Heart left ventricle (tissue), 16 donors: ENCODE measurements at regions of chr17 and their contacts with region 1.

Region 1: GRCh38 chr17:81484195-81484979 is 28.2 kb downstream of the ACTG1 start:
- DNase-seq: peak; percentile 88 to 95 (median 91)
- ATAC-seq: peak; percentile 23 to 75 (median 60)
- H3K4me3 ChIP-seq: peak overlapping the region; percentile 20 to 64 (median 51)
- H3K27ac ChIP-seq: peak overlapping the region in 2 of 12 donors; percentile 49 to 62
- H3K4me1 ChIP-seq: peaks cover 0 to 70% (median 53%) of the 10 kb centered on the region in 12 donors
- H3K27me3 ChIP-seq: peaks cover 0 to 8% (median 0%) of the 10 kb centered on the region in 9 donors
- CTCF ChIP-seq: peak; percentile 93 to 100 (median 98)
- POLR2A ChIP-seq: no peak

Region 2: DNA sequence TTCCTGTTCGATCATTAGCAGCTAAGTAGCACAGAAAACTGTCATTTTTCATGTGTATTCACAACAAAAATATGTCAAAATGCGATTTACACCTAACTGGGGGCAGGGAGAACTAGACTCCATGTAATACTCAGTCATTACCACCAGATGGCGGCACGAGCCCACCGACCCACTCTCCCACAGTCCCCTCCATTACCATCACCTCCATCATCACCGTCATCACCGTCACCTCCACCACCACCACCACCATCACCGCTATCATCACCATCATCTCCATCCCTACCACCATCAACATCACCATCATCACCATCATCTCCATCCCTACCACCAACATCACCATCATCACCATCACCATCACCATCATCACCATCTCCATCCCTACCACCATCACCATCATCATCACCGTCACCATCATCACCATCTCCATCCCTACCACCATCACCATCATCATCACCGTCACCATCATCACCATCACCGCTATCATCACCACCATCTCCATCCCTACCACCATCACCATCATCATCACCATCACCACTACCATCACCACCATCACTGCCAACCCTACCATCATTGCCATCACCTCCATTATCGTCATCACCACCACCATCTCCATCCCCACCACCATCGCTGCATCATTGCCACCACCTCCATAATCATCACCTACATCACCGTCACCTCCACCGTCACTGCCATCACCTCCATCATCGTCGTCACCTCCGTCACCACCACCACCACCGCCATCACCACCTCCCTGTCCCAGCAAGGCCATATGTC is 230.8 kb before region 1 on chr17:
- intact Hi-C with region 1: loop called (anchors 1 to 2 kb)
- DNase-seq: peak in 1 of 5 donors; percentile 52
- ATAC-seq: peak in 3 of 4 donors; percentile 33 to 45 (median 35)
- H3K4me3 ChIP-seq: no peak overlapping the region
- H3K27ac ChIP-seq: no peak overlapping the region
- H3K4me1 ChIP-seq: peaks cover 3 to 19% (median 13%) of the 10 kb centered on the region in 12 donors
- H3K27me3 ChIP-seq: no peaks in the 10 kb centered on the region
- CTCF ChIP-seq: peak; percentile 66 to 88 (median 81)
- POLR2A ChIP-seq: no peak

Region 3: GRCh38 chr17:81302861-81303333 is 181.5 kb before region 1 on chr17:
- intact Hi-C with region 1: loop called in 4 of 10 experiments (anchors 2 to 10 kb)
- DNase-seq: no peak
- ATAC-seq: peak in 3 of 4 donors; percentile 33 to 50 (median 41)
- H3K4me3 ChIP-seq: no peak overlapping the region
- H3K27ac ChIP-seq: no peak overlapping the region
- H3K4me1 ChIP-seq: peaks cover 0 to 17% (median 0%) of the 10 kb centered on the region in 12 donors
- H3K27me3 ChIP-seq: no peaks in the 10 kb centered on the region
- CTCF ChIP-seq: peak in 5 of 12 donors; percentile 9 to 42 (median 22)
- POLR2A ChIP-seq: no peak

Region 4: GRCh38 chr17:81401723-81402529 is 82.5 kb before region 1 on chr17:
- intact Hi-C with region 1: loop called in 4 of 10 experiments (anchors 5 kb)
- DNase-seq: peak in 2 of 5 donors; percentile 74
- ATAC-seq: peak in 3 of 4 donors; percentile 6 to 16 (median 7)
- H3K4me3 ChIP-seq: peak overlapping the region in 8 of 12 donors; percentile 6 to 95 (median 80)
- H3K27ac ChIP-seq: peak overlapping the region; percentile 51 to 98 (median 97)
- H3K4me1 ChIP-seq: peaks cover 16 to 88% (median 66%) of the 10 kb centered on the region in 12 donors
- H3K27me3 ChIP-seq: peaks cover 0 to 15% (median 0%) of the 10 kb centered on the region in 9 donors
- CTCF ChIP-seq: peak in 10 of 12 donors; percentile 6 to 47 (median 24)
- POLR2A ChIP-seq: no peak

Region 5: GRCh38 chr17:81436294-81436849 is 48.0 kb before region 1 on chr17:
- intact Hi-C with region 1: loop called in 2 of 10 experiments (anchors 5 kb)
- DNase-seq: peak; percentile 64 to 86 (median 73)
- ATAC-seq: peak in 3 of 4 donors; percentile 57 to 79 (median 74)
- H3K4me3 ChIP-seq: peak overlapping the region in 2 of 12 donors; percentile 4 to 7
- H3K27ac ChIP-seq: peak overlapping the region; percentile 32 to 91 (median 75)
- H3K4me1 ChIP-seq: peaks cover 0 to 49% (median 32%) of the 10 kb centered on the region in 12 donors
- H3K27me3 ChIP-seq: no peaks in the 10 kb centered on the region
- CTCF ChIP-seq: peak in 1 of 12 donors; percentile 19
- POLR2A ChIP-seq: no peak

Region 6: DNA sequence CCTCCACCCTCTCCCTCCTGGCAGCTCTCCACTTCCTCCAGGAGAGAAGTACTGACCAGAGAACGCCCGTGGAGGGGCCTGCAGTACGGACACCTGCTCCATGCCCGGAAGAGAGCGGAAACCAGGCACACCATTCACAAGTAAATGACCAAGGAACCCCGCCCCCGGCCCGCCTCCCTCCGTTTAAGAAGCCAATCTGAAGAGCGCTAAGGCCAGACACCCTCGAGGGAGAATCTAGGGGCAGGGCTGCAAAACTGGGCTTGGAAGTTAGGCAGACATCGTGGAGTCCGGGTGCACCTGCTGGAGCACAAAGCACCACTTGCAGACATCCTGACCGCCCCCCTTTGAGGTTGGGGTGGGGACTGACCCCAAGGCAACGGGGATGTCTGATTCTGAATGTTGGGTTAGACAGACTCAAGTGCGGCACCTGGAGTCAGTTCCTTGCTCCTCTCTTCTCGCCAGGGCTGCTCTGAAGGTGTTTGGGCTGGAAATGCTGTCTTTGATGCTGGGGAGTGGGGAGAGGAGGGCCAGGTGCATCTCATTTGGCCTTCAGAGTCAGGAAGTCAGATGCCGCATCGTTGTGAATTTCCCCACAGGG is 68.7 kb after region 1 on chr17:
- intact Hi-C with region 1: loop called in 1 of 10 experiments (anchors 5 kb)
- DNase-seq: peak; percentile 65 to 78 (median 71)
- ATAC-seq: peak; percentile 14 to 62 (median 44)
- H3K4me3 ChIP-seq: peak overlapping the region; percentile 82 to 100 (median 92)
- H3K27ac ChIP-seq: peak overlapping the region; percentile 77 to 95 (median 90)
- H3K4me1 ChIP-seq: peaks cover 0 to 65% (median 39%) of the 10 kb centered on the region in 12 donors
- H3K27me3 ChIP-seq: no peaks in the 10 kb centered on the region
- CTCF ChIP-seq: peak in 1 of 12 donors; percentile 11
- POLR2A ChIP-seq: no peak

Region 7: DNA sequence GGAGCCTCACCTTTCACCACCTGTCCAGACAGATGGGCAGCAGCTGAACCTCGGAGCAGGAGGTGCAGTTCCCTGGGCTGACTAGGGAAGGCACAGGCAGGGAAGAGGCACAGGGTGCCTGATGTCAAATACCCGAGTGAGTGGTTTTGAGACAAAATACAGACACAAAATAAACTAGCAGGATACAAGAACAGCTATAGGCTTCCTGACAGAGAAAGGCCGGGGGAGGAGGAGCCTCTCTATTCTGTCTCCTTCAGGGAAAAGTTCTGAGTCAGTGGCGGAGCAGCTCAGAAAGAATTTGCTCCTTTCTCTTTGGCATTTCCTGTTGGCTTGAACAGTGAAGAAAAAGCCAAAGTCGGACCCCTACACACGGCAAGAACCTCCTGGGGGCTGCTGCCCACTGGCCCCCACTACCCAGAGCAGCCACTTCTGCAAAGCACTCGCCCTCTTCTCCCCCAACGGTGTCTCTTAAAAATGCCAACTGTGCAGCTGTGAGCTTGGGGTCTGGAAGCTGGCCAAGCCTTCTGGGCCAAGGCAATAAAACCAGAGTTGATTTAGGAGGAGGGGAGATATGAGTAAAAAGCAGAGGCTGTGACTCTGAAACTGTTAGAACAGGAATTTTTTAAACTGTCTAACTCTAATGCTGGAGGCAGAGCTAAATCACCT is 82.2 kb after region 1 on chr17:
- intact Hi-C with region 1: no loop called
- DNase-seq: peak in 4 of 5 donors; percentile 62 to 83 (median 68)
- ATAC-seq: peak; percentile 41 to 81 (median 77)
- H3K4me3 ChIP-seq: peak overlapping the region in 6 of 12 donors; percentile 4 to 40 (median 14)
- H3K27ac ChIP-seq: peak overlapping the region; percentile 27 to 84 (median 72)
- H3K4me1 ChIP-seq: peaks cover 9 to 47% (median 21%) of the 10 kb centered on the region in 12 donors
- H3K27me3 ChIP-seq: no peaks in the 10 kb centered on the region
- CTCF ChIP-seq: no peak
- POLR2A ChIP-seq: peak in 1 of 2 donors; percentile 9

Region 8: DNA sequence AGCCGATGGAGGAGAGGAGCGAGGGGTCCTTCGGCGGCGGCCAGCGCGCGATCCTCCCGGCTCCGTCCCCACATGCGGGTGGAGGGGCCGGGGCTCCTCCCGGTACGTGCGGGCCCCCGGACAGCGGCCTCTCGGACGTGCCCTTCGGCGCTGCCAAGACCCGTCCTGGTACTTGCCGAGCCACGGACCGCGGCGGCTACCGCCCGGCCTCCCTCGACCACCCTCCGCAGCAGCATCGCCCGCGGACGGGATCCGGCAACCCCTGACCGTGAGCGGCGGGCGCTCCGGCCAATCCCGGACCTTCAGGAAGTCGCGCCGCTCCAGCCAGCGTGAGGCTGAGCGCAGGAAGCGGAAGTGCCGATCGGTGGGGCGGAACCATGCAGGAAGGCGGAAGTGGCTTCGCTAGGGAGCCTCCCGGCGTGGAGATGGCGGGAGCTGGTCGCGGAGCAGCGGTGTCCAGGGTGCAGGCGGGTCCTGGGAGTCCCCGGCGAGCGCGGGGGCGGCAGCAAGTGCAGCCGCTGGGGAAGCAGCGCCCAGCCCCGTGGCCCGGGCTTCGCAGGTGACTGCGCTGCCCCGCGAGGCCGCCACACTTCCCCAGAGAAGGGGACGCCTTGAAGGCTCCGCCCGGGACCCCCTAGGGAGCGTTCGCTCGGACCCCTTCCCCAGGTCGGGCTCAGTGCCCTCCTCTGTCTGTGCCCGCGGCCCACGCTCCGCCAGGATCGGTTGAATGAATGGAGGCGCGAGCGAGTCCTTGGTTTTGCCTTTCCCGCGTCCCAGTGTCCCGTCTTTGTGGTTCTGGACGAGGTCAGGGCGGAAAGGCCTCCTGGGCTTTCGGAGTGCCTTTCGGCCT is 182.2 kb after region 1 on chr17 and contains the starts of genes CCDC137 and OXLD1:
- intact Hi-C with region 1: no loop called
- DNase-seq: peak; percentile 97 to 98 (median 98)
- ATAC-seq: peak; percentile 97 to 100 (median 99)
- H3K4me3 ChIP-seq: peak within 1 kb of the TSS; percentile 77 to 100 (median 94)
- H3K27ac ChIP-seq: peak within 1 kb of the TSS; percentile 62 to 95 (median 88)
- H3K4me1 ChIP-seq: peaks cover 0 to 29% (median 16%) of the 10 kb centered on the region in 12 donors
- H3K27me3 ChIP-seq: no peaks in the 10 kb centered on the region
- CTCF ChIP-seq: no peak
- POLR2A ChIP-seq: peak; percentile 64 to 95
- total RNA-seq, gene CCDC137: 3.5 to 10.1 (median 6.3) TPM
- total RNA-seq, gene OXLD1: 16.9 to 28.8 (median 21.7) TPM